GM12878 (cell line): ENCODE measurements at regions of chr7 and their contacts with region 1.

Region 1: DNA sequence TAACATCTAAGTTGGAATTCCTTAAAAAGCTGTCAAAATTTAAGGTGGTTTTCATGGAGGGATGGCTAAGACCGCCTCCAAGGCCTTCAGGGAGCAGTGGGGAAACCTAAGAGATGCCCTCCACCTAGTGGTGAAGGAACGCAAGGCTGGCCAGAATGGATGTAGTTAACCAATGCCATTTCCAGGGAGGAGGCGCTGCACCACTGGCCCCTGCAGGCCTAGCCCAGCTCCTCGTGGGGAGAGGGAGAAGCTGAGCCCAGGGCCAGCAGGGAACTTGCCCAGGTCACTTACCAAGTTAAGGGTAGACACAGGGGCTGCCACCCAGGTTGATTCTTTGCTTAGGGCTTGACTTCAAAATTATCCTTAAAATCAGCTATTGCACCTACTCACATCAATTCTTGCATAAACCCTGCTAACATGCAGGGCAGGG is 32.0 kb downstream of the FIGNL1 start:
- DNase-seq: no peak
- ATAC-seq: peak; percentile 96
- H3K4me3 ChIP-seq: no peak overlapping the region
- H3K27ac ChIP-seq: no peak overlapping the region
- H3K4me1 ChIP-seq: peaks cover 22% of the 10 kb centered on the region
- H3K27me3 ChIP-seq: no peaks in the 10 kb centered on the region
- CTCF ChIP-seq: peak; percentile 98 to 99 (median 99); a peak in 5 of 6 replicates
- EP300 ChIP-seq: no peak
- POLR2A ChIP-seq: no peak
- RAD21 ChIP-seq: peak; percentile 98

Region 2: DNA sequence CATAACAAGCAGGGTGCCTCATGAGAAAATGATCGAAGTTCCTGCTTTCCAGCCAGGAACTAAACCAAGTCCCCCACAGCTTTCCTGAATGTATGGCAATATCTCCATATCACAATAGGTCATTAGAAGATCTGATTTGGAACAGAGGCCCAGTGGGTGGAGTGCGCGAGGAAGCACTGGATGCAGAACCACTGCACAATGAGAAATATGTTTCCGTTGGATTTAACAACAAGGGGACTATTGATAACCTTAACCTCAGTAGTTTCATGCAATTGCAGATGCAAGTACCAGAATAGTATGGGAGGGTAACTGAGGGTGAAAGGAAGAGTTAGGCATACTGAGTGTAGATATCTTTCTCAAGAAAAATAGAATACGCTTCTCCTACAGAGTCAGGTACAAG is 370.4 kb before region 1 on chr7:
- CTCF ChIA-PET with region 1: no interaction called
- POLR2A ChIA-PET with region 1: no interaction called
- RAD21 ChIA-PET with region 1: no interaction called
- SMC1A ChIA-PET with region 1: no interaction called
- in situ Hi-C with region 1: no loop called
- intact Hi-C with region 1: no loop called
- DNase-seq: no peak
- ATAC-seq: no peak
- H3K4me3 ChIP-seq: no peak overlapping the region
- H3K27ac ChIP-seq: no peak overlapping the region
- H3K4me1 ChIP-seq: no peaks in the 10 kb centered on the region
- H3K27me3 ChIP-seq: no peaks in the 10 kb centered on the region
- CTCF ChIP-seq: no peak
- EP300 ChIP-seq: no peak
- POLR2A ChIP-seq: no peak
- RAD21 ChIP-seq: no peak

Region 3: DNA sequence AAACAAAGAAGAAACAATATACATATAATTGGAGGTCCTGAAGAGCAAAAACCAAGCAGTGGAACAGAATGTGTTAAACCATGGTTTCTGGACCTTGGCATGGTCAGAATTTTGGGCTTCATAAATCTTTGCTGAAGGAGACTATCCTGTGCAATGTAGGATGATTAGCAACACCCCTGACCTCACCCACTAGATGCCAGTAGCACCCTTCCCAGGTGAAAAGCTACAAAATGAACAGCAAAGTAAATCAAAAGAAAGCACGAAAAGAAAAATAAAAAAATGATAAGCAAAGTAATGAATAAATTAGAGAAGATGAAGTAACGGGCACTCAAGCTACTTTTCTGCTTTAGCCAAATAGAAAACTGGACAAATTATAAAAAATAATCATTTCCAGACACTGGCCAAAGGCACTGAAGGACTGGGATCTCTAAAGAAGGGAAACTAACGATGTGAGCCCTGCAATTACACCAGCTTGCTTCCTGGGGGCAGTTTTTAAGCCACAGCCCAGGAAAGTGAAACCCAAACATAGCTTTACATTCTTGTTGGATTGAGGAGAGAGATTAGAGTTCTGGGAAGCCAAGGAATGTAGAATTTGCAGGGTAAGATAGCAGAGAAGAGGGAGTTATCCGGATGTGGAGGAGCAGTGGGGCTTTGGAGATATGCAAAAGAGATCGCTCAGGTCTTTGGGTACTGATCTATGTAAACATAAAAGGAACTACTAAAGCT is 305.7 kb before region 1 on chr7:
- CTCF ChIA-PET with region 1: interaction called, 81 read pairs
- POLR2A ChIA-PET with region 1: interaction called, 6 read pairs
- RAD21 ChIA-PET with region 1: interaction called, 40 read pairs
- SMC1A ChIA-PET with region 1: interaction called, 37 read pairs
- in situ Hi-C with region 1: no loop called
- intact Hi-C with region 1: no loop called
- DNase-seq: no peak
- ATAC-seq: no peak; the same call in 2 of the 3 replicates
- H3K4me3 ChIP-seq: no peak overlapping the region
- H3K27ac ChIP-seq: no peak overlapping the region
- H3K4me1 ChIP-seq: no peaks in the 10 kb centered on the region
- H3K27me3 ChIP-seq: no peaks in the 10 kb centered on the region
- CTCF ChIP-seq: 0 out of 6 replicates have a peak, but pooled peaks of 1 of the 3 experiments have one; percentile 4
- EP300 ChIP-seq: no peak
- POLR2A ChIP-seq: no peak
- RAD21 ChIP-seq: 0 out of 2 replicates have a peak, but pooled peaks have one; percentile 6

Region 4: GRCh38 chr7:50156706-50157105 is 261.4 kb before region 1 on chr7:
- CTCF ChIA-PET with region 1: interaction called, 11 read pairs
- POLR2A ChIA-PET with region 1: no interaction called
- RAD21 ChIA-PET with region 1: interaction called, 7 read pairs
- SMC1A ChIA-PET with region 1: interaction called, 4 read pairs
- in situ Hi-C with region 1: no loop called
- intact Hi-C with region 1: no loop called
- DNase-seq: no peak
- ATAC-seq: peak; percentile 36
- H3K4me3 ChIP-seq: no peak overlapping the region
- H3K27ac ChIP-seq: no peak overlapping the region
- H3K4me1 ChIP-seq: peaks cover 14% of the 10 kb centered on the region
- H3K27me3 ChIP-seq: no peaks in the 10 kb centered on the region
- CTCF ChIP-seq: no peak
- EP300 ChIP-seq: no peak
- POLR2A ChIP-seq: no peak
- RAD21 ChIP-seq: no peak

Region 5: GRCh38 chr7:50229964-50230363 is 188.1 kb before region 1 on chr7:
- CTCF ChIA-PET with region 1: interaction called, 6 read pairs
- POLR2A ChIA-PET with region 1: no interaction called
- RAD21 ChIA-PET with region 1: interaction called, 5 read pairs
- SMC1A ChIA-PET with region 1: interaction called, 10 read pairs
- in situ Hi-C with region 1: no loop called
- intact Hi-C with region 1: no loop called
- DNase-seq: no peak
- ATAC-seq: no peak
- H3K4me3 ChIP-seq: no peak overlapping the region
- H3K27ac ChIP-seq: no peak overlapping the region
- H3K4me1 ChIP-seq: no peaks in the 10 kb centered on the region
- H3K27me3 ChIP-seq: no peaks in the 10 kb centered on the region
- CTCF ChIP-seq: peak; percentile 21 to 58 (median 46); a peak in 5 of 6 replicates
- EP300 ChIP-seq: no peak
- POLR2A ChIP-seq: no peak
- RAD21 ChIP-seq: peak; percentile 58

Region 6: DNA sequence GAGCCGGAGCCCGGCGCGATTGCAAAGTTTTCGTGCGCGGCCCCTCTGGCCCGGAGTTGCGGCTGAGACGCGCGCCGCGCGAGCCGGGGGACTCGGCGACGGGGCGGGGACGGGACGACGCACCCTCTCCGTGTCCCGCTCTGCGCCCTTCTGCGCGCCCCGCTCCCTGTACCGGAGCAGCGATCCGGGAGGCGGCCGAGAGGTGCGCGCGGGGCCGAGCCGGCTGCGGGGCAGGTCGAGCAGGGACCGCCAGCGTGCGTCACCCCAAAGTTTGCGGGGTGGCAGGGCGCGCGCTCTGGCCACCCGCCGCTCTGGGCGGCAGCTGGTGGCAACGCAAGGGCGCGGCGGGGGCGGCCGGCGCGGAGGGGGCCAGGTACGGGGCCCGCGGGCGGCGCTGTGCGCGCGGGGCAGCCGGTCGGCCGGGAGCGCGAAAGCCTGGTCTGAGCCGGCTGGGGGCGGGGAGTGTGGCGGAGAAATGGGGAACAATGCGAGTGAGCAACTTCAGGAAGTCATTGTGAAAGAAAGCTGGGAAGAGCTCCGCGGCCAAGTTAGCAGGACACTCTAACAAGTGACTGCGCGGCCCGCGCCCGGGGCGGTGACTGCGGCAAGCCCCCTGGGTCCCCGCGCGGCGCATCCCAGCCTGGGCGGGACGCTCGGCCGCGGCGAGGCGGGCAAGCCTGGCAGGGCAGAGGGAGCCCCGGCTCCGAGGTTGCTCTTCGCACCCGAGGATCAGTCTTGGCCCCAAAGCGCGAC is 113.8 kb before region 1 on chr7 and contains the start of gene IKZF1:
- CTCF ChIA-PET with region 1: interaction called, 4 read pairs
- POLR2A ChIA-PET with region 1: no interaction called
- RAD21 ChIA-PET with region 1: interaction called, 5 read pairs
- SMC1A ChIA-PET with region 1: interaction called, 14 read pairs
- in situ Hi-C with region 1: no loop called
- intact Hi-C with region 1: loop called (anchors 5 kb)
- DNase-seq: no peak
- ATAC-seq: peak; percentile 41
- H3K4me3 ChIP-seq: peak within 1 kb of the TSS; percentile 79
- H3K27ac ChIP-seq: peak within 1 kb of the TSS; percentile 67
- H3K4me1 ChIP-seq: peaks cover 10% of the 10 kb centered on the region
- H3K27me3 ChIP-seq: no peaks in the 10 kb centered on the region
- CTCF ChIP-seq: no peak; a peak in 1 of 6 replicates
- EP300 ChIP-seq: no peak
- POLR2A ChIP-seq: peak; percentile 33
- RAD21 ChIP-seq: no peak
- polyA plus RNA-seq, gene IKZF1: 27.2 to 29.8 TPM

Region 7: GRCh38 chr7:50379082-50379481 is 39.0 kb before region 1 on chr7:
- CTCF ChIA-PET with region 1: interaction called, 12 read pairs
- POLR2A ChIA-PET with region 1: no interaction called
- RAD21 ChIA-PET with region 1: interaction called, 5 read pairs
- SMC1A ChIA-PET with region 1: interaction called, 12 read pairs
- in situ Hi-C with region 1: no loop called
- intact Hi-C with region 1: no loop called
- DNase-seq: no peak
- ATAC-seq: peak; percentile 61
- H3K4me3 ChIP-seq: no peak overlapping the region
- H3K27ac ChIP-seq: no peak overlapping the region
- H3K4me1 ChIP-seq: no peaks in the 10 kb centered on the region
- H3K27me3 ChIP-seq: no peaks in the 10 kb centered on the region
- CTCF ChIP-seq: no peak
- EP300 ChIP-seq: no peak
- POLR2A ChIP-seq: no peak
- RAD21 ChIP-seq: no peak

Region 8: GRCh38 chr7:50449881-50450589 is 31.9 kb after region 1 on chr7 and contains the start of gene FIGNL1:
- CTCF ChIA-PET with region 1: interaction called, 7 read pairs
- POLR2A ChIA-PET with region 1: no interaction called
- RAD21 ChIA-PET with region 1: interaction called, 17 read pairs
- SMC1A ChIA-PET with region 1: interaction called, 7 read pairs
- in situ Hi-C with region 1: no loop called
- intact Hi-C with region 1: no loop called
- DNase-seq: peak; percentile 59
- ATAC-seq: peak; percentile 93
- H3K4me3 ChIP-seq: peak within 1 kb of the TSS; percentile 77
- H3K27ac ChIP-seq: peak within 1 kb of the TSS; percentile 28
- H3K4me1 ChIP-seq: peaks cover 16% of the 10 kb centered on the region
- H3K27me3 ChIP-seq: no peaks in the 10 kb centered on the region; a peak in 1 of 4 replicates
- CTCF ChIP-seq: no peak
- EP300 ChIP-seq: no peak
- POLR2A ChIP-seq: peak; percentile 90
- RAD21 ChIP-seq: no peak
- polyA plus RNA-seq, gene FIGNL1: 11.5 to 11.6 TPM

Region 9: GRCh38 chr7:50475340-50475739 is 57.2 kb after region 1 on chr7:
- CTCF ChIA-PET with region 1: no interaction called
- POLR2A ChIA-PET with region 1: no interaction called
- RAD21 ChIA-PET with region 1: no interaction called
- SMC1A ChIA-PET with region 1: no interaction called
- in situ Hi-C with region 1: no loop called
- intact Hi-C with region 1: no loop called
- DNase-seq: no peak
- ATAC-seq: peak; percentile 76
- H3K4me3 ChIP-seq: no peak overlapping the region
- H3K27ac ChIP-seq: no peak overlapping the region
- H3K4me1 ChIP-seq: no peaks in the 10 kb centered on the region
- H3K27me3 ChIP-seq: peaks cover 0 to 2% of the 10 kb centered on the region in 2 experiments; a peak in 3 of 4 replicates
- CTCF ChIP-seq: no peak
- EP300 ChIP-seq: no peak
- POLR2A ChIP-seq: no peak
- RAD21 ChIP-seq: no peak